ENCODE measurements at regions of chr11 and their contacts with region 1.

Region 1: DNA sequence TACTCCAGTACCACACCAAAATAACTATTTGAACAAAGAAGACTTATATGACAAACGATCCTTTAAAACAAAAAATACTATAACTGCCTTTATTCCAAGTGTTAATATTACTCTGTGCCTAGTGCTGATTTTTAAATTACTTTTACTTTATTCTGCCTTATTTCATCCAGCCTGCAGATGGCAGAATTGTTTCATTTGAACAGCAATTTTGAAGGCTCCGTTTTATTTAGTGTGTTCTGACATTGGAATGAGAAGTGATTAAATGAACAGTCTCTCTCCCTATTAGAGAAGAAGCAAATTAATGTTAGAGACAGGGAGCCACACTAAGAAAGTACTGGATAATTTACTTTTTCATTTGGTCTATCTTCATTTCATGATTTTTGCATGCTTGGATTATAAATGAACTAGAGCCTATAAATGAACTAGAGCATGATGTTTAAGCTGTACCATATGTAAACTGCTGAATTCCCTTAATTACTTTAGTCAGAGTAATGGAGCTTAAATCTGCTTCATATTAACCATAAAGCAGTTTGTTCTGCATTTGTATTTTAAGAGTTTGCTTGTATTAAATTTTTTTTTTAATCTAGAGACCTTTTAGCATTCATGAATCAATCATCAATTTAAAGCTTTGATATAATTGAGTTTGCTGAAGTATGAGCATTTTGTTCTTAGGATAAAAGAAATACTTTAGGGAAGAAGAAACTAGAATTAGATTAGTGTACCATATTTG is 9.8 kb downstream of the PDHX start:
- DNase-seq: peak in 1 of 4 experiments; percentile 54
- ATAC-seq: peak; percentile 75
- H3K4me3 ChIP-seq: no peak overlapping the region
- H3K27ac ChIP-seq: no peak overlapping the region
- H3K4me1 ChIP-seq: peaks cover 0 to 4% of the 10 kb centered on the region in 2 experiments; a peak in 3 of 5 replicates
- H3K27me3 ChIP-seq: no peaks in the 10 kb centered on the region
- CTCF ChIP-seq: peak; percentile 55 to 87 (median 59); a peak in 5 of 6 replicates
- EP300 ChIP-seq: no peak
- POLR2A ChIP-seq: no peak
- RAD21 ChIP-seq: peak; percentile 89 to 91

Region 2: GRCh38 chr11:34907934-34908593 is 18.2 kb before region 1 on chr11:
- CTCF ChIA-PET with region 1: no interaction called
- POLR2A ChIA-PET with region 1: no interaction called
- in situ Hi-C with region 1: no loop called
- intact Hi-C with region 1: no loop called
- DNase-seq: peak in 1 of 4 experiments; percentile 18
- ATAC-seq: peak; percentile 52; the same call in 2 of the 3 replicates
- H3K4me3 ChIP-seq: no peak overlapping the region
- H3K27ac ChIP-seq: no peak overlapping the region
- H3K4me1 ChIP-seq: peaks cover 5 to 13% of the 10 kb centered on the region in 2 experiments; a peak in 4 of 5 replicates
- H3K27me3 ChIP-seq: no peaks in the 10 kb centered on the region
- CTCF ChIP-seq: no peak
- EP300 ChIP-seq: no peak
- POLR2A ChIP-seq: no peak
- RAD21 ChIP-seq: no peak

Region 3: DNA sequence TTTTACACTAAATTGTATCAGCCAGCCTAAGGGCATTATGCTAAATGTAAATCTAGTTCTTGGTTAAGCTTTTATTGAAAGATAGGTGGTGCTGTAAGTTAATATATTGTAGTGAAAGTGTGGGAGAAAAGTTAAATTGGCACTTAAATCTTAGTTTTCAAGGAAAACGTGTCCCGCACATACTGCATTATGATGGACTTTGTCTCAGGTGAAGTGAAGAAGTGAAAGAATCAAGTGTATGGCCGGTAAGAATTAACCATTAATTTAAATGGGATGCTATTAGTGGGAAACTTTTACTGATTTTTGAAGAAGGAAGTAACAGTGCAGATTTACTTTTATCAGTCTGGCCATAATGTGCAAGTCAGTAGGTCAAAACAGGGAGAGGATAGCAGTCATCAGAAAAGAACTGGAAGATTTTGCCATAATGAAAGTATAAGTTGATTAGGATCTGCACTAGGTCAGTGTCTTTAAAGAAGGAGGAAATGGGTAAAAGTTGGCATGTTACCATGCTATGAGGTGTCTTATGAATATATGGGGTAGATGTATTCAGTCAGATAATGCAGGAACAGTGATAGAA is 71.8 kb after region 1 on chr11:
- CTCF ChIA-PET with region 1: interaction called, 3 read pairs
- POLR2A ChIA-PET with region 1: no interaction called
- in situ Hi-C with region 1: no loop called
- intact Hi-C with region 1: loop called (anchors 5 kb)
- DNase-seq: no peak
- ATAC-seq: no peak; the same call in 2 of the 3 replicates
- H3K4me3 ChIP-seq: no peak overlapping the region
- H3K27ac ChIP-seq: no peak overlapping the region
- H3K4me1 ChIP-seq: no peaks in the 10 kb centered on the region
- H3K27me3 ChIP-seq: no peaks in the 10 kb centered on the region
- CTCF ChIP-seq: peak in 2 of 3 experiments; percentile 39 to 60; a peak in 2 of 6 replicates
- EP300 ChIP-seq: no peak
- POLR2A ChIP-seq: no peak
- RAD21 ChIP-seq: peak; percentile 87 to 92

Region 4: GRCh38 chr11:35144136-35144741 is 218.0 kb after region 1 on chr11:
- CTCF ChIA-PET with region 1: no interaction called
- POLR2A ChIA-PET with region 1: no interaction called
- in situ Hi-C with region 1: no loop called
- intact Hi-C with region 1: loop called (anchors 1 kb)
- DNase-seq: no peak
- ATAC-seq: no peak
- H3K4me3 ChIP-seq: no peak overlapping the region
- H3K27ac ChIP-seq: no peak overlapping the region
- H3K4me1 ChIP-seq: peaks cover 0 to 6% of the 10 kb centered on the region in 2 experiments; a peak in 2 of 5 replicates
- H3K27me3 ChIP-seq: peaks cover 12 to 28% of the 10 kb centered on the region in 2 experiments
- CTCF ChIP-seq: no peak
- EP300 ChIP-seq: no peak
- POLR2A ChIP-seq: no peak
- RAD21 ChIP-seq: no peak

Region 5: DNA sequence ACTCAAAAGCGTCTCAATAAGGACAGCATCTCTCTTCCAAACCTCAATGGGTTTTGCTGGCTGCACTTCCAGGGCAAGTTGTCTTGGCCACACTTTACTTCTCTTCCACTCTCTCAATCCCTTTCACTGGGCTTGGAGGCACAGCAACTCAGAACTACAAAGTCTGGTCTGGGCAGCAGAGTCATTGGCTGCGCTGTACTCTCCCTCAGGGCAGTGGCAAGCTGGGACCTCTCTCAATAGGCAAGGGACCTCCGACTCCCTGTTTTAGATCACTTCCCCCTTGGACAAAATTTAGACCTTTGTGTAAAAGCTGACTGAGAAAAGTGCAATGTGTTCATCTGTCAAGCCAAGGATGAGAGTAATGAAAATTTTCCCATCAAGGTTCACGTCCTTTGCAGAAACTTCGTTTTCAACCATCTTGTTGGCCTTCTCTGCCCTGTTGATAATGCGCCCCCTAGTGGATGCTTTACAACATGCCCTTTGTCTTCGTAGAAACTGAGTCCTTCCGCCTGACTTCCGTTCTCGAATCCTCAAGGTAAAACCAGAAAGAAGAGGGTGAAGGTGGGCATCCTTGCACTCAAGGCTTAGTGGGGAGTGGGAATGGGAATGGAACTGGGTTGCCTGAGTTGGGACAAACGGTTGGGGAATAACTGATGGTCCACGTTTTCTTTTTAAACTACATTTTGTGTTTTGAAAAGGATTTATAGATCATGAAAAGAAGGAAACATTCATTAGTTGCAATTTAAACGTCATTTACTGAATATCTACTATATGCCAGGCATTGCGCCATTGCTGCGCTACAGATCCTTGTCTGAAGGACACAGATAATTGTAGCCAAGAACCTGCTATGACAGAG is 311.8 kb after region 1 on chr11:
- CTCF ChIA-PET with region 1: interaction called, 8 read pairs
- POLR2A ChIA-PET with region 1: no interaction called
- in situ Hi-C with region 1: loop called (anchors 25 kb)
- intact Hi-C with region 1: loop called (anchors 1 kb)
- DNase-seq: peak; percentile 49 to 78 (median 58)
- ATAC-seq: peak; percentile 75
- H3K4me3 ChIP-seq: no peak overlapping the region
- H3K27ac ChIP-seq: no peak overlapping the region
- H3K4me1 ChIP-seq: no peaks in the 10 kb centered on the region; a peak in 1 of 5 replicates
- H3K27me3 ChIP-seq: peaks cover 0 to 3% of the 10 kb centered on the region in 2 experiments; a peak in 3 of 5 replicates
- CTCF ChIP-seq: peak; percentile 72 to 80 (median 79)
- EP300 ChIP-seq: no peak
- POLR2A ChIP-seq: no peak
- RAD21 ChIP-seq: peak; percentile 73 to 87

Region 6: GRCh38 chr11:35305670-35306382 is 379.6 kb after region 1 on chr11:
- CTCF ChIA-PET with region 1: interaction called, 3 read pairs
- POLR2A ChIA-PET with region 1: no interaction called
- in situ Hi-C with region 1: no loop called
- intact Hi-C with region 1: loop called (anchors 5 kb)
- DNase-seq: peak; percentile 50 to 63 (median 51)
- ATAC-seq: peak; percentile 89
- H3K4me3 ChIP-seq: no peak overlapping the region
- H3K27ac ChIP-seq: no peak overlapping the region
- H3K4me1 ChIP-seq: no peaks in the 10 kb centered on the region; a peak in 2 of 5 replicates
- H3K27me3 ChIP-seq: peaks cover 2 to 9% of the 10 kb centered on the region in 2 experiments; a peak in 4 of 5 replicates
- CTCF ChIP-seq: peak; percentile 50 to 64 (median 62)
- EP300 ChIP-seq: no peak
- POLR2A ChIP-seq: no peak
- RAD21 ChIP-seq: peak; percentile 58 to 69

Region 7: GRCh38 chr11:35485656-35486322 is 559.5 kb after region 1 on chr11:
- CTCF ChIA-PET with region 1: interaction called, 3 read pairs
- POLR2A ChIA-PET with region 1: no interaction called
- in situ Hi-C with region 1: no loop called
- intact Hi-C with region 1: loop called (anchors 5 kb)
- DNase-seq: peak; percentile 65 to 84 (median 79)
- ATAC-seq: peak; percentile 100
- H3K4me3 ChIP-seq: no peak overlapping the region
- H3K27ac ChIP-seq: no peak overlapping the region
- H3K4me1 ChIP-seq: no peaks in the 10 kb centered on the region
- H3K27me3 ChIP-seq: no peaks in the 10 kb centered on the region
- CTCF ChIP-seq: peak; percentile 81 to 91 (median 82)
- EP300 ChIP-seq: no peak
- POLR2A ChIP-seq: no peak
- RAD21 ChIP-seq: peak; percentile 65 to 67

Region 8: DNA sequence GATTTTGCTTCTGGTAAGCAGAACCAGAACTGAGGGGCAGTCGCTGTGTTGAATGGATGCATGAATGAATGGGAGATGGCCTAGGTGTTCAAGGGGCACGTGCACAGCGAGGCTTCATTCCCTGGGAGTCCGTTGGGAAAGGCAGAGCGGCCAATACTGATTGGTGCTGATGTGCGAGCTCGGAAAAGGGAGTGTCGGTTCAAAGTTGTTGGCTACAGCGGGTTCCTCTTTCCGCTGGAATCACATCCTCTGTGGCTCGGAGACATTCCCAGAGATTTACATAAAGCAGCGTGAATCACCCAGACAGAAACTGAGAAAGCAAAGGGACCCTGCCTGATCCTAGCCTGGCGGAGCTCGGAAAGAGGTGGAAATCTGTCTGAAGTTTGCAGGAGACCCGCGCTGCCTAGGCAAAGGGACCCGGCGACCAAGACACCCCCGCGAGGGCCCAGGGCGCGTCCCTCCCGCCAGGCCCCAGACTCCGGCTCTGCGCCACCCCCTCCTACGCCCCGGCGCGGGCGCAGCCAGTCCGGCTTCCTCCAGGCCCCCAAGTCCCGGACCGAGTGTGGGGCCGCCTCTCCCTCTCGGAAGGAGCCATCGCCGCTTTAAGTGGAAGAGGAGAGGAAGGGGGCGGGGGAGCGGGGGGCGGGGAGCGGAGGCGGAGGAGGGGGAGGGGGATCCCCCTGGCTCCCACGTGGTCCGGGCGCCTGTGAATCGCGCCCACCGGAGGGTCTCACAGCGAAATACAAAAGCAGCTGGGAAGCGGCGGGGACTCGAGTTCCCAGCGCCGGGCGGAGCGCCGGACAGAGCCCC is 691.6 kb after region 1 on chr11 and contains the start of gene FJX1:
- CTCF ChIA-PET with region 1: no interaction called
- POLR2A ChIA-PET with region 1: no interaction called
- in situ Hi-C with region 1: no loop called
- intact Hi-C with region 1: no loop called
- DNase-seq: peak; percentile 63 to 81 (median 78)
- ATAC-seq: peak; percentile 71
- H3K4me3 ChIP-seq: peak within 1 kb of the TSS; percentile 35
- H3K27ac ChIP-seq: no peak within 1 kb of the TSS
- H3K4me1 ChIP-seq: peaks cover 0 to 24% of the 10 kb centered on the region in 2 experiments; a peak in 4 of 5 replicates
- H3K27me3 ChIP-seq: peaks cover 21 to 30% of the 10 kb centered on the region in 2 experiments
- CTCF ChIP-seq: no peak
- EP300 ChIP-seq: no peak
- POLR2A ChIP-seq: no peak
- RAD21 ChIP-seq: no peak
- polyA plus RNA-seq, gene FJX1: 0.10 to 0.38 TPM

Region 9: DNA sequence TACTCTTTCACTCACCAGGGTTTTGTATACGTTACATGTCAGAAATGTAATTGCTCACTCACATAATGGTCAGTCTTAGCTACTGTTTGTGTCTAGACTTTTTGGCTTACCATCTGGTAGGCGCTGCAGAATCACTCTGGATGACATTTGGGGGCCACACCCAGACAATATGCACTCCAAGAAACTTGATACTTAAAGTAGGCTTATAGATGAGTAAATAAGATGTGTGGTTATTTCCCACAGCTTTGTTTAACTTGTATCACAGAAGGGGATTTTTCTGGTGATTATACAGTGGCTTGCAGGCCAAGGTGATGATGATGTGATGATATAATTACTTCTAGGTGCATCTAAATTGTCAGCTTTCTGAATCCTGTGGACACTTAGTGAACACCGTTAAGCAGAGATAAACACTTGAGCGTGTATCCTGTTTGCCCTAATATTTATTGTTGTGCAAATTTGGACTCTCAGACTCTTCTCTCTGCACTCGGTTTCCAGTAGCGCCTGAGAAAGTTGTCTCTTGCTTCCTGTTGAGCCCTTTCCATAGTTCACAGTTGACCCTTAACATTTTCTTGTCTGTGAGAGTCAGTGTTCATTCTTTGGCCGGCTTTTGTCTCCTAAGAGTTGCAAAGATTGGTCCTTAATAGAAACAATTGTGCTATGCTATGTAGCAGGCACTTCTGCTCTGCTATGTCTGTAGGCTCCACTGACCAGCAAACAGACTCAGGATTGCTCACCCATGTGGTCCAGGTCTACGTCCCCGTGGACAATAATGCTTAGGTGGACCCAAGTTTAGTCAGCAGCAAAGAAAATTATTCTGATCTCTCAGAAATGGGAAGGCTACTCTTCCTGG is 1459.1 kb after region 1 on chr11:
- CTCF ChIA-PET with region 1: no interaction called
- POLR2A ChIA-PET with region 1: no interaction called
- in situ Hi-C with region 1: no loop called
- intact Hi-C with region 1: no loop called
- DNase-seq: no peak
- ATAC-seq: no peak
- H3K4me3 ChIP-seq: no peak overlapping the region
- H3K27ac ChIP-seq: no peak overlapping the region
- H3K4me1 ChIP-seq: peaks cover 0 to 4% of the 10 kb centered on the region in 2 experiments; a peak in 1 of 5 replicates
- H3K27me3 ChIP-seq: peaks cover 0 to 5% of the 10 kb centered on the region in 2 experiments
- CTCF ChIP-seq: no peak
- EP300 ChIP-seq: no peak
- POLR2A ChIP-seq: no peak
- RAD21 ChIP-seq: no peak

Measured in K562 (cell line).